ENCODE measurements at regions of chr4 and their contacts with region 1.

Region 1: GRCh38 chr4:124555959-124556358 is 156.6 kb downstream of the ANKRD50 start:
- DNase-seq: no peak
- H3K4me3 ChIP-seq: no peak overlapping the region
- H3K27ac ChIP-seq: no peak overlapping the region
- H3K4me1 ChIP-seq: no peaks in the 10 kb centered on the region
- H3K27me3 ChIP-seq: no peaks in the 10 kb centered on the region
- CTCF ChIP-seq: no peak
- POLR2A ChIP-seq: no peak

Region 2: GRCh38 chr4:125179727-125180126 is 623.8 kb after region 1 on chr4:
- intact Hi-C with region 1: loop called (anchors 10 kb)
- DNase-seq: no peak
- H3K4me3 ChIP-seq: no peak overlapping the region
- H3K27ac ChIP-seq: no peak overlapping the region
- H3K4me1 ChIP-seq: peaks cover 13% of the 10 kb centered on the region
- H3K27me3 ChIP-seq: no peaks in the 10 kb centered on the region
- CTCF ChIP-seq: no peak
- POLR2A ChIP-seq: no peak